B cell (primary cell): ENCODE measurements at regions of chr5 and their contacts with region 1.

Region 1: DNA sequence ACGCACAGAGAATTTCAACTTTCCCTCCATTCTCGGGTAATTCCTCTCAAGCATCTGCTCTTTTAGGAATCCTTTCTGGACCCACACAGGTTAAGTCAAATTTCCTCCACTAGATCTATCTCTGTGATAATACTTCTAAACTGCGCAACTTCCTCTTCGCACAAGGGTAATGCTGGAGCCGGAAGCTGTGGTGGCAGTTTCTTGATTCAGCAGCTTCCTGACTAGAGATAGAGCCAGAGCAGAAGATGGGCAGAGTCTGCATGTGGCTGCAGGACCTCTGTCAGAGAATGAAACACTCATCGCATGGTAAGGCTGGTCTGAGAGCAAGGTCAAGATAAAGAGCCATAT is 11.1 kb upstream of the CDC42SE2 start:
- DNase-seq: peak; percentile 89
- ATAC-seq: peak; percentile 86
- H3K4me3 ChIP-seq: peak overlapping the region; percentile 39 to 55 (median 52)
- H3K4me3 Mint-ChIP-seq: peak overlapping the region; percentile 85
- H3K27ac ChIP-seq: peak overlapping the region; percentile 90 to 92
- H3K27ac Mint-ChIP-seq: peak overlapping the region; percentile 96
- H3K4me1 ChIP-seq: peaks cover 55 to 70% of the 10 kb centered on the region in 2 donors
- H3K4me1 Mint-ChIP-seq: peaks cover 72% of the 10 kb centered on the region
- H3K27me3 ChIP-seq: no peaks in the 10 kb centered on the region
- H3K27me3 Mint-ChIP-seq: no peaks in the 10 kb centered on the region
- CTCF ChIP-seq: no peak

Region 2: DNA sequence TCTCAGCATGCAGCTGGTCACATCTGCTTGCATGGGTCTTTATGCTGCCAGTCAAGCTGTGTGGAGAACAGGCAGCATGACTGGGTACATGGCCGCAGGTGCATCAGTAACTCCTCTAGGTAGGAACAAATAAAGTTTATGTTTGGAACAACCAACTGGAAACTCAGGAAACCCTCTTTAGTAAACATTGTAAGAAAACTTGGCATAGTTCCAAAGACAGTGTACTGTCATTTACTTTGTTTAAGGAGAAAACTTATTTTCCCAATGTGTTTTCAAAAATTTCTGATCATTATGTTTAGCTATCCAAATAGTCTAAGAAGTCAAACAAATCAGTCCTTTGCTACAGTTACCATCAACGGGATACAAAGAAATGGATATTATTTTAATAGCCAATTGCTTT is 962.6 kb before region 1 on chr5:
- CTCF ChIA-PET with region 1: no interaction called
- POLR2A ChIA-PET with region 1: no interaction called
- intact Hi-C with region 1: no loop called
- DNase-seq: no peak
- ATAC-seq: no peak
- H3K4me3 ChIP-seq: no peak overlapping the region
- H3K4me3 Mint-ChIP-seq: no peak overlapping the region
- H3K27ac ChIP-seq: no peak overlapping the region
- H3K27ac Mint-ChIP-seq: no peak overlapping the region
- H3K4me1 ChIP-seq: no peaks in the 10 kb centered on the region
- H3K4me1 Mint-ChIP-seq: no peaks in the 10 kb centered on the region
- H3K27me3 ChIP-seq: no peaks in the 10 kb centered on the region
- H3K27me3 Mint-ChIP-seq: no peaks in the 10 kb centered on the region
- CTCF ChIP-seq: no peak

Region 3: GRCh38 chr5:131129306-131129705 is 123.5 kb before region 1 on chr5:
- CTCF ChIA-PET with region 1: no interaction called
- POLR2A ChIA-PET with region 1: no interaction called
- intact Hi-C with region 1: no loop called
- DNase-seq: no peak
- ATAC-seq: no peak
- H3K4me3 ChIP-seq: no peak overlapping the region
- H3K4me3 Mint-ChIP-seq: no peak overlapping the region
- H3K27ac ChIP-seq: no peak overlapping the region
- H3K27ac Mint-ChIP-seq: no peak overlapping the region
- H3K4me1 ChIP-seq: no peaks in the 10 kb centered on the region
- H3K4me1 Mint-ChIP-seq: no peaks in the 10 kb centered on the region
- H3K27me3 ChIP-seq: peaks cover 0 to 4% (median 2%) of the 10 kb centered on the region in 4 experiments
- H3K27me3 Mint-ChIP-seq: peaks cover 8% of the 10 kb centered on the region
- CTCF ChIP-seq: no peak

Region 4: DNA sequence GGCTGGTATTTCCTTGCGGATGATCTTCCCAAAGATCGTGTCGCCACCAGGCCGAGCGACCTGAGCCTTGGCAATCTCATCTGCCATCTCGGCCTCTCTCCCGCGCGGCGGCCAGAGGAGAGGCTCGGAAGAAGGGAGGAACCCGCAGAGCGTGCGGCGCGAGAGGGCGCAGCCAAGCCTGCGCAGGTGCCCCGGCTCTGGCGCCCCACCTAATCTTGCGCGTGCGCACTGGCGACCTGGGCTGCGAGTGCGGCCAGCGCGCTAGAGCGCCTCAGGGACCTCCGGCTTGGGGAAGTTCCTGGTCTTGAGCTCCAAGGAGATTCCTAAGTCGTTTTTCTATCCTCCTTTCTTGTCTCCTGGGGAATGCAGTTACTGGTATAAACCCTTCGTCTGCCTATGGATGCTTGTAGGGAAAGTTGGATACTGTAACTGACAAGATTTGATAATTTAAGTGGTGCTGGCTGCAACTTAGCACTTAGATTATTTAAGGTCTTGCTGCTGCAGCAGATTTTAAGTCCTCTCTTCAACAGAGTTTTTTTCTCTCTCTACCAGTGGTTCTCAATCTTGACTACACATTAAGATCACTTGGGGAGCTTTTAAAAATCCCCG is 87.6 kb before region 1 on chr5 and contains the start of gene HINT1:
- CTCF ChIA-PET with region 1: interaction called, 7 read pairs
- POLR2A ChIA-PET with region 1: no interaction called
- intact Hi-C with region 1: loop called (anchors 1 kb)
- DNase-seq: peak; percentile 96
- ATAC-seq: peak; percentile 80
- H3K4me3 ChIP-seq: peak within 1 kb of the TSS; percentile 69 to 96 (median 94)
- H3K4me3 Mint-ChIP-seq: peak within 1 kb of the TSS; percentile 90
- H3K27ac ChIP-seq: peak within 1 kb of the TSS; percentile 82 to 92
- H3K27ac Mint-ChIP-seq: peak within 1 kb of the TSS; percentile 98
- H3K4me1 ChIP-seq: peaks cover 20 to 23% of the 10 kb centered on the region in 2 donors
- H3K4me1 Mint-ChIP-seq: peaks cover 41% of the 10 kb centered on the region
- H3K27me3 ChIP-seq: no peaks in the 10 kb centered on the region
- H3K27me3 Mint-ChIP-seq: no peaks in the 10 kb centered on the region
- CTCF ChIP-seq: no peak
- total RNA-seq, gene HINT1: 180 and 206 TPM in 2 replicates

Region 5: DNA sequence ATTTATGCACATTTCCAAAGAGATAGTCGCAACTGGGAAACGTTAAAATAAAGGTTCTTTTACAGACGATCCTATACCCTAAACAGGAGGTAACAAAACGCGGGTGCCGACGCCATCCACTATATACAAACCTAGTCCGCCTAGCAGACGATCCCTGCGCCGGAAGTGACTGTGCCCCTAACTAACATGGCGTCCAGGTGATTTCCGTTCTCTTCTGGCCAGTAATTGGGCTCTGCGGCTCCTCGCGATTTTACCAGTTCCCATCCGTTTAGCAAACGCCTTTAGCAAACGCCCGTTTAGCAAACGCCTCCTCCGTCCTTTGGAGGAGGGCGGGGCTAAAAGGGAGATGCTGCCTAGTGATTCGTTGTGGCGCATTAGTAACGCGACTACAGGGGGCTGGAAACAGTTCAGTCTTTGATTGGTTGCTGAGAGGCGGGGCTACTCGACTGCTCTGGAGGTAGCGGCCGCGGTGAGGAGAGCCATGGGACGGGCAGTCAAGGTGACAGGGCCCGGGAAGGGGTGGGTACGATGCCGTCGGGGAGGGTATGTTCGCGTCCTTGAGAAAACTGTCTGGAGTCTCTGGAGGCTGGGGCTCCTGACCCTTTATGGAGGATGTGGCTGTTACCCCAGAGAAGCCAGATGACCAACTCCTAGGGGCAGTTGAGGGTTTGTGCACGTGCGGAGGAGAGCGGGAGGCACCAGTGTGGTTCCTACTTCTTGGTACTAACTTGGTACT is 82.1 kb before region 1 on chr5 and contains the start of gene LYRM7:
- CTCF ChIA-PET with region 1: no interaction called
- POLR2A ChIA-PET with region 1: no interaction called
- intact Hi-C with region 1: loop called (anchors 1 kb)
- DNase-seq: peak; percentile 98
- ATAC-seq: peak; percentile 96
- H3K4me3 ChIP-seq: peak within 1 kb of the TSS; percentile 78 to 89 (median 79)
- H3K4me3 Mint-ChIP-seq: peak within 1 kb of the TSS; percentile 98
- H3K27ac ChIP-seq: peak within 1 kb of the TSS; percentile 77 to 81
- H3K27ac Mint-ChIP-seq: peak within 1 kb of the TSS; percentile 94
- H3K4me1 ChIP-seq: peaks cover 24% of the 10 kb centered on the region in 2 donors
- H3K4me1 Mint-ChIP-seq: peaks cover 47% of the 10 kb centered on the region
- H3K27me3 ChIP-seq: no peaks in the 10 kb centered on the region
- H3K27me3 Mint-ChIP-seq: no peaks in the 10 kb centered on the region
- CTCF ChIP-seq: no peak
- total RNA-seq, gene LYRM7: 11.6 and 12.3 TPM in 2 replicates

Region 6: DNA sequence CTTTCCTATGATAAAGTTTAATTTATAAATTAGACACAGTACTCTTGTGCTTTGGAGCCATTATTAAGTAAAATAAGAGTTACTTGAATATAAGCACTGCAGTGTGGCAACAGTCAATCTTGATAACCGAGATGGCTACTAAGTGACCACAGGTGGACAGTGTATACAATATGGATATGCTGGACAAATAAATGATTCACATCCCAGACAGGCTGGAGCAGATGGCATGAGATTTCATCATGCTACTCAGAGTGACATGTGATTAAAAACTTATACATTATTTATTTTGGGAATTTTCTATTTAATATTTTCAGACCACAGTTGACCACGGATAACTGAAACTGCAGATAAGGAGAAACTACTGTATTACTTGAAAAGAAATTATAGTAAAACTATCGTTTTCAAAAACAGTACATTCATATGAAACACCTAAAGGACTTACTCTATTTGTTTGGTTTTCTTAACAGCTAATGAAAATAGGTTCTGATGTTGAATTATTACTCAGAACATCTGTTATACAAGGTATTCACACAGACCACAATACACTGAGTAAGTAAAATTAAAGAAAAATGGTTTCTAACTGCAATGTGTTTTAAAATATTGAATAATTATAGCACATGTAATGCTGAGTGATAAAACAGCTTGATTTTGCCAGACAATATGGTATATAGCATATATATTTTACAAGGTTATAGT is 66.1 kb before region 1 on chr5:
- CTCF ChIA-PET with region 1: no interaction called
- POLR2A ChIA-PET with region 1: no interaction called
- intact Hi-C with region 1: no loop called
- DNase-seq: no peak
- ATAC-seq: no peak
- H3K4me3 ChIP-seq: no peak overlapping the region
- H3K4me3 Mint-ChIP-seq: no peak overlapping the region
- H3K27ac ChIP-seq: no peak overlapping the region
- H3K27ac Mint-ChIP-seq: no peak overlapping the region
- H3K4me1 ChIP-seq: no peaks in the 10 kb centered on the region
- H3K4me1 Mint-ChIP-seq: no peaks in the 10 kb centered on the region
- H3K27me3 ChIP-seq: no peaks in the 10 kb centered on the region
- H3K27me3 Mint-ChIP-seq: no peaks in the 10 kb centered on the region
- CTCF ChIP-seq: no peak

Region 7: GRCh38 chr5:131209506-131210150 is 43.2 kb before region 1 on chr5:
- CTCF ChIA-PET with region 1: interaction called, 6 read pairs
- POLR2A ChIA-PET with region 1: interaction called, 14 read pairs
- intact Hi-C with region 1: loop called (anchors 1 kb)
- DNase-seq: peak; percentile 94
- ATAC-seq: peak; percentile 87
- H3K4me3 ChIP-seq: peak overlapping the region; percentile 42 to 88 (median 59)
- H3K4me3 Mint-ChIP-seq: peak overlapping the region; percentile 85
- H3K27ac ChIP-seq: peak overlapping the region; percentile 89 to 92
- H3K27ac Mint-ChIP-seq: peak overlapping the region; percentile 98
- H3K4me1 ChIP-seq: peaks cover 37 to 53% of the 10 kb centered on the region in 2 donors
- H3K4me1 Mint-ChIP-seq: peaks cover 51% of the 10 kb centered on the region
- H3K27me3 ChIP-seq: no peaks in the 10 kb centered on the region
- H3K27me3 Mint-ChIP-seq: no peaks in the 10 kb centered on the region
- CTCF ChIP-seq: no peak

Region 8: GRCh38 chr5:131224387-131225201 is 28.2 kb before region 1 on chr5:
- CTCF ChIA-PET with region 1: interaction called, 6 read pairs
- POLR2A ChIA-PET with region 1: interaction called, 11 read pairs
- intact Hi-C with region 1: no loop called
- DNase-seq: peak; percentile 73
- ATAC-seq: peak; percentile 82
- H3K4me3 ChIP-seq: peak overlapping the region in 1 of 5 experiments; percentile 8
- H3K4me3 Mint-ChIP-seq: no peak overlapping the region
- H3K27ac ChIP-seq: peak overlapping the region; percentile 59 to 75
- H3K27ac Mint-ChIP-seq: no peak overlapping the region
- H3K4me1 ChIP-seq: peaks cover 48 to 51% of the 10 kb centered on the region in 2 donors
- H3K4me1 Mint-ChIP-seq: peaks cover 21% of the 10 kb centered on the region
- H3K27me3 ChIP-seq: no peaks in the 10 kb centered on the region
- H3K27me3 Mint-ChIP-seq: no peaks in the 10 kb centered on the region
- CTCF ChIP-seq: no peak

Region 9: DNA sequence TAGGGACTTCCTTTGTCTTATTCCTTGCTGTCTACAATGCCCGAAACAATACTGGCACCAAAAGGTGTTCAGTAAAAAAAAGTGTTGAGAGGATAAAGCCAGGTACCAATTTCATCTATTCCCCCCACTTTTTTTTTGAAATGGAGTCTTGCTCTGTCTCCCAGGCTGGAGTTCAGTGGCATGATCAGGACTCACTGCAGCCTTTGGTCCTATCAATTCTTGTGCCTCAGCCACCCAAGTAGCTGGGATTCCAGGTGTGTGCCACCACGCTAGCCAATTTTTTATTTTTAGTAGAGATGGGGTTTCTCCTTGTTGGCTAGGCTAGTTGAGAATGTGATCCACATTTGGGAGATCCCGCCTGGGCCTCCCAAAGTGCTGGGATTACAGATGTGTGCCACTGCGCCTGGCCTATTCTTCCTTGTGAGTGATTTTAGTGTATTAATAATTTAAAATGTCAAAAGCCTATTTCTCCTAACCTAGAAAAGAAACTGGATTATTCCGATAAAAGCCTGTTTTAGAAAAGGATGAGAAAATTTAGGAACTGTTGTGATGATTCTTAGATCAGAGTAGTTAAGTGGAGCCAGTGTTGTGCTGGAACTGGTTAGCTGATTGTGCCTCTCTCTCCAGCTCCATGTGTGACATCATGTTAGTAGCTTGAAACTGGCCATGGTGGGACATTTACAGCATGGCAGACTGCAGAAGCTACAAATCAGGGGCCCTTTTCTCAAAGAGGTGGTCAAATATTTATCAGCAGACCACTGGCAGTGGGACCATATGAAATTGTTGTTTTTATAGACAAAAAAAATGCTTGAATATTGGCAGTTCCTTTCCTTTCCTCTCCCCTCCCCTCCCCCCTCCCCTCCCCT is 25.3 kb after region 1 on chr5:
- CTCF ChIA-PET with region 1: no interaction called
- POLR2A ChIA-PET with region 1: interaction called, 4 read pairs
- intact Hi-C with region 1: loop called (anchors 2 kb)
- DNase-seq: no peak
- ATAC-seq: no peak
- H3K4me3 ChIP-seq: no peak overlapping the region
- H3K4me3 Mint-ChIP-seq: no peak overlapping the region
- H3K27ac ChIP-seq: peak overlapping the region in 1 of 2 donors; percentile 70
- H3K27ac Mint-ChIP-seq: peak overlapping the region; percentile 69
- H3K4me1 ChIP-seq: peaks cover 70 to 83% of the 10 kb centered on the region in 2 donors
- H3K4me1 Mint-ChIP-seq: peaks cover 78% of the 10 kb centered on the region
- H3K27me3 ChIP-seq: no peaks in the 10 kb centered on the region
- H3K27me3 Mint-ChIP-seq: no peaks in the 10 kb centered on the region
- CTCF ChIP-seq: no peak